Ascending aorta (tissue), 2 donors: ENCODE measurements at regions of chr6 and their contacts with region 1.

Region 1: DNA sequence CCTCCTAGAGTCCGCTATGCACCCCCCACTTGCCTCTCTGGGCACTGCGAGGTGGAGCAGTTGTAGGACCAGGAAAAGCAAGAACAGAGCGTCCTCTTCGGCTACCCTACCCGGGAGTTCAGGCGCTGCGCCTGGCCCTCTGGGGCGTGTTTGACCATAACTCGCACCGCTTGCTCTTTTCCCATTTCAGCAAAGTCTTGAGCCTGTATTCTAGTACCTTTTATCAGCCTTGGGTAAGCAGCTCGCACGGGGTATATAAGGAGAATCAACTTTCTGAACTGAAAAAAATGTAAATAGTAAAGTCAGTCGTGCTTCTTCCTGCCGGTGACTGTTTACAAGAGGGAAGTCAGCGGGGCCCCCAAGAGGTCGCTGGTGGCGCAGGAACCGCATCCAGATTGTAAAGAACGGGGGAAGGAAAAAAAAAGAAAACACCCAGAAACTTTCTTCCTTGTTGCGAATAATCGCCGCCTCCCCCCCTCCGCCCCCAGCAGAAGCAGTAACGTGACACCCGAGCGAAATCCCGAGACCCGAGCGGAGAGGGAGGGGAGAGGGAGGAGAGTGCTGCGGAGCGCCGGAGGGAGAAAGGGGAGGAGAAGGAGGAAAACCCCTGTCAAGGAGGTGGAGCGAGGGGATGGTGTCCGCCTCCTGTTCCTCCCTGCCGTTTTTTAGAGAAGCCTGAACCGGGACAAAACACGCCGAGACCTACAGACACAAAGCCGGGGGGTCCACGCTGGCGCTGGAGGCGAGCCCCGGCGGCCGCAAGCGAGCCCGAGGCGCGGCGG is at the start of gene UST:
- DNase-seq: peak; percentile 60 to 95
- H3K4me3 ChIP-seq: peak within 1 kb of the TSS; percentile 91 to 98
- H3K27ac ChIP-seq: peak within 1 kb of the TSS; percentile 83 to 95
- H3K4me1 ChIP-seq: peaks cover 0 to 17% of the 10 kb centered on the region in 2 donors
- H3K27me3 ChIP-seq: no peaks in the 10 kb centered on the region
- CTCF ChIP-seq: peak in 2 of 3 experiments; percentile 52 to 54
- total RNA-seq, gene UST: 27.0 TPM

Region 2: GRCh38 chr6:148578245-148578732 is 168.3 kb before region 1 on chr6:
- intact Hi-C with region 1: loop called (anchors 5 kb)
- DNase-seq: peak in 1 of 2 donors; percentile 89
- H3K4me3 ChIP-seq: no peak overlapping the region
- H3K27ac ChIP-seq: no peak overlapping the region
- H3K4me1 ChIP-seq: peaks cover 0 to 6% of the 10 kb centered on the region in 2 donors
- H3K27me3 ChIP-seq: no peaks in the 10 kb centered on the region
- CTCF ChIP-seq: peak; percentile 83 to 95 (median 87)

Region 3: DNA sequence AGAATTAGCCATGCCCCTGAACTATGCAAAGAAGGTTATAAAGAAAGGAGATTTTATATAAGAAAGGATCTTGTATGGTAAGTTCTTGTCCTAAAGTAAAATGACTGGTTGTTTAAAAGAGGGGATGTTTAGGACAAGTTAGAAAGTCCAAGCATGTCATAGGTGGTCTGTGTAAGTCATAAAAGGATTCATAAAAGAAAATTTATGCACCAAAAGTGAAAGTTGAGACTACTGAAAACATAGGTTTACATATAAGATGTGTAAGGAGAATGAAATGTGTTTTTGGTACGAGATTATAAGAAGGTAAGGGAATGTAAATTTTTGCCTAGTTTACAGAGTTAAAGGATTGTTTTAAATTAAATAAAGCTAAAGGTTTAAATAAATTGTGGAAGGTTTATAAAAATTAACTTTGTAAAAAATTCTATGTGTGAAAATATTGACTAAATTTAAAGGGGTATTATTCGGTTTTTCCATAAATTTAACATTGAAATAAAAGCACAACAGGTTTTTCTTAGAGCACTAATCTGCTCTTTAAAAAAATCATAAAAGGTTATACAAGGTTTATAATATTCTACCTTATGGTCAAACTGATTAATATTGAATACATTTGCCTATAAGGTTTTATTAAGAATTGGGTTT is 93.3 kb before region 1 on chr6:
- intact Hi-C with region 1: loop called (anchors 5 kb)
- DNase-seq: no peak
- H3K4me3 ChIP-seq: no peak overlapping the region
- H3K27ac ChIP-seq: peak overlapping the region in 1 of 2 donors; percentile 24
- H3K4me1 ChIP-seq: peaks cover 0 to 26% of the 10 kb centered on the region in 2 donors
- H3K27me3 ChIP-seq: no peaks in the 10 kb centered on the region
- CTCF ChIP-seq: no peak

Region 4: DNA sequence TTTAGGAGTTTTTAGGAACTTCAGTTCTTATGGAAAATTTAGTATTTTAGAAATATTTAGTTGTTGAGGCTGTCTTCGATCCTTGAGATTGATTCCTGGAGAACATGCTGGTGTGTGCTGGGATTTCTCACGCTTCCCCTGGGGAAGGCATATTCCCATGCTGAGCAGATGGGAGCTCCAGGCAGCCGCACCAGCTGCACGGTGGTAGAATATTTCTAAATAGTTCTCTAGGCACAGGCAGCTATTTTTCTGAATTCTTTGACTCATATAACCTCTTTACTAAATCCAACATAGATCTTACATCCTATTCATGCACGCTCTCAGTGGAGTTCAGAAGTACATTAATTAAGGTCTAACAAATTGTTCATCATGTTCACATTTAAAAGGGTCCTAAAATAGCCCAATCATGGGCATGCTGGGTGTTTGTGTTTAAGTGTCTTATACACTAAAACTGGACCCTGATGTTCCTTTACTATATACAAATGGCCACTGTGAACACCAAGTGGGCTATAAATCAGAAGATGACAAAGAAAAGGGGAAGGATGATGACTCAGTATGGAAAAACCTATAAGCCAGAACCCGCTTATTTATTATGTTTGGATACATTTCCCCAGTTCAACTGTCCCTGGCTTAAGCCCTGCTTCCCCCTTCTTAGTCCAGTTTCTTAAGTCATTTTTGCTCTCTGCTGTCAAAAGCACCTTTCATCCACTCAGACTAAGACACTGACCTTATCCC is 138.7 kb after region 1 on chr6:
- intact Hi-C with region 1: loop called (anchors 5 kb)
- DNase-seq: no peak
- H3K4me3 ChIP-seq: no peak overlapping the region
- H3K27ac ChIP-seq: peak overlapping the region; percentile 44 to 49
- H3K4me1 ChIP-seq: peaks cover 15 to 39% of the 10 kb centered on the region in 2 donors
- H3K27me3 ChIP-seq: no peaks in the 10 kb centered on the region
- CTCF ChIP-seq: no peak

Region 5: DNA sequence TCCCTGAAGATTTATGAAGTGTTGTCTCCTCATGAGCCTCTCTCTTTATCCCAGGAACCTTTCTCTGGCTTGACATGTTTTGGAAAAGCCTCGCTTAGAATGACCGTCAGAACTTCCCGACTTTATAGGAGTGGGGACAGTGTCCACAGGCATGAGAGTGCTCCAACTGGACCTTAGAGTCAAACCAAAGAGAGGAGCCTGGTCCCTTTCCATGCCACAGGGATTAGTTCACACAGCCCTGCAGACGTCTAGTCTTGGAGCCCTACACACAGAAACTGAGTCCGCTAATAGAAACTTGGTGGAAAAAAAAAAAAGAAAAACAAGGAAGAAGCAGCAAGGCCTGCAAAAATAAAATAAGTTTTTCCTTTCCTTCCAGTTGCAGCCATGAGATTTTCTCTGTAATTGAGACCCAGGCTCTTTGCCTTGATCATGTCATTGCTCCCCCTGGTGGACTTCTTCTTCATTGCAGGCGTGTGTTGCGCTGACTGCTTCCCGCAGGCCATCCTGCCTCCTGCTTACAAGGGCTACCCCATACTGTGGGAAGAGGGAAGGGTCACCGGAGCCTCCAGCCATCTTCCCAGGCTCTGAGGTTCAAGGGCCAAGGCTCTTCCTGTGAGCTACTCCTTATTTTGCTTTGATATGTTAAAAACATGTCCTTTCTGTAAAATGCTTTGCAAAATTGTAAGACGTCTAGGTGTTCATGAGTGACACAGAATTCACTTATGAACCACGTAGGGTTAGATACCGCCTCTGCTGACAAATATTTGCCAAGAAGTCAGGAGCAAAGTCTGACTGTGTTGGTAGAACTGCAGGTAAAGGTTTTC is 201.3 kb after region 1 on chr6:
- intact Hi-C with region 1: loop called (anchors 2 kb)
- DNase-seq: peak; percentile 33 to 92
- H3K4me3 ChIP-seq: no peak overlapping the region
- H3K27ac ChIP-seq: no peak overlapping the region
- H3K4me1 ChIP-seq: no peaks in the 10 kb centered on the region
- H3K27me3 ChIP-seq: no peaks in the 10 kb centered on the region
- CTCF ChIP-seq: peak; percentile 80 to 88 (median 81)

Region 6: GRCh38 chr6:149316798-149317655 is 570.5 kb after region 1 on chr6:
- intact Hi-C with region 1: loop called (anchors 10 kb)
- DNase-seq: peak; percentile 70 to 95
- H3K4me3 ChIP-seq: peak overlapping the region; percentile 72 to 86
- H3K27ac ChIP-seq: peak overlapping the region; percentile 95 to 99
- H3K4me1 ChIP-seq: peaks cover 0 to 5% of the 10 kb centered on the region in 2 donors
- H3K27me3 ChIP-seq: no peaks in the 10 kb centered on the region
- CTCF ChIP-seq: no peak